HepG2 (cell line): ENCODE measurements at regions of chr14 and their contacts with region 1.

Region 1: GRCh38 chr14:35533357-35534207 is at the start of gene INSM2:
- DNase-seq: peak; percentile 70
- ATAC-seq: peak; percentile 84
- H3K4me3 ChIP-seq: peak within 1 kb of the TSS; percentile 62 to 80 (median 63)
- H3K27ac ChIP-seq: no peak within 1 kb of the TSS
- H3K4me1 ChIP-seq: peaks cover 20% of the 10 kb centered on the region
- H3K27me3 ChIP-seq: peaks cover 11 to 55% of the 10 kb centered on the region in 2 experiments
- CTCF ChIP-seq: peak; percentile 58
- EP300 ChIP-seq: no peak
- POLR2A ChIP-seq: no peak
- RAD21 ChIP-seq: peak; percentile 38
- total RNA-seq, gene INSM2: not detected in 2 replicates

Region 2: DNA sequence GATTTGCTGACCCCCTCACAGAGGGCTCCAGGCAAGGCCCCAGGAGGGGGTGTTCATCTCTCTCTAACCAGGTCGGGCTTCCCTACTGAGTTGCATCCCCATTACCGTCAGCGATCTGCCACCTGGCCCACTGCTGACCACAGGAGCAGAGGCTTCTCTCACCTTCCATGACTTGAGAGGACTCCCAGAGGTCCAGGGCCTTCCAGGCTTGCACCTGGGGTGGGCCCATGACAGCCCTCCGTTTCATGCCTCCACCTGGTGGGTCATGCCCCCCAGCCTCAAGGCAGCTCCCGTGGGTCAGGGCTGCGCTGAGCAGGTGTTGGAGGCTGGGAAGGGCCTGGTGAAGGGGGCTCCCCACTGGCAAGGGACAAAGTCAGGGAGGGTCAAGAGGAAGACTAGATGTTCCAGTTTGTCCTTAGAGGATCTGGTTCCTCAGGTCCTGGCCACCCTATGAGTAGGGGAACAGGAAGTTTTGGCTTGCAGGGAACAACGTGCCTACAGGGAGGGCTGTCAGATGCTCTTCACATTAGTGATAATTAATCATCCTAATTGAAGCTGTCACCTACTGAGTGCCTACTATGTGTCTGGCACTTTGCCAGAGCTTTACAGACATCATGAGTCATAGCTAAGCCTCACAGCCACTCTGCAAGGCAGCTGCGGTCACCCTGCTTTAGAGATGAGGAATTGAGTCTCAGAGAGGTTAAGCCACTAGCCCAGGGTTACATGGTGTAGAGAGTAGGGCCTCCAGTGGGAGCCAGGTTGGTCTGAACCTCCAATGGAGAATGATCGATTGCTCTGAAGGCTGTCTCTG is 142.8 kb before region 1 on chr14:
- CTCF ChIA-PET with region 1: no interaction called
- POLR2A ChIA-PET with region 1: no interaction called
- in situ Hi-C with region 1: no loop called
- intact Hi-C with region 1: no loop called
- DNase-seq: no peak
- ATAC-seq: peak; percentile 21
- H3K4me3 ChIP-seq: no peak overlapping the region
- H3K27ac ChIP-seq: no peak overlapping the region
- H3K4me1 ChIP-seq: peaks cover 47% of the 10 kb centered on the region
- H3K27me3 ChIP-seq: no peaks in the 10 kb centered on the region; a peak in 1 of 5 replicates
- CTCF ChIP-seq: no peak
- EP300 ChIP-seq: no peak
- POLR2A ChIP-seq: no peak
- RAD21 ChIP-seq: no peak

Region 3: DNA sequence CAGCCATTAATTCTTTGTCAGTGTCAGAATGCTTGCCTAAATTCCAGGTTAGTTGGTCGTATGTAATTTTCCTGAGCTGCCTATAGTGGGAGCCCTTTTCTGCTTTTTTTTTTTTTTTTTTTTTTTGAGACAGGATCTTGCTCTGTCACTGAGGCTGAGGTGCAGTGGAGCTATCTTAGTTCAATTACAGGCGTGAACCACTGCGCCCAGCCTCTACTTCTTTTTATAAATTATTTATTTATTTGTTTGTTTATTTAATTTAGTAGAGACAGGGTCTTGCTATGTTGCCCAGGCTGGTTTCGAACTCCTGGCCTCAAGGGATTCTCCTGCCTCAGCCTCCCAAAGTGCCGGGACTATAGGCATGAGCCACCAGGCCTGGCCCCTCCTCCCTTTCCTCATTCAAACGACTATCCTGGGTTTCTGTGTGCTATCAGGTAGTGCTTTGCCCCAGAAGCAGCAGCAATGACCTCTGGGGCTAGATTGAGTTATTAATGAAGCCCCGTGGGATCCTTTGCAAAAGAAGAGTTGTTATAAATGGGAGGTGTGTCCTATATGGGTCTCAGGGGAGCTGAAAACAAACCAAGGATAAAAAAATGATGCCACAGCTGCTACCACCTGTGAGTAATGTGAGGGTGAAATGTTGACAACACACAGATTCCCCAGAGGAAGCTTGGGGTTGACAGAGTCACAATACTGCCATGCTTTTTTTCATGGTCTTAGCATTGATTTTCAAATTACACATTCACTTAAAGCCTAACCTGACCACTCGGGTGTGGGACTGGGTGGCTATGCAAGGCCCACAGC is 94.5 kb before region 1 on chr14:
- CTCF ChIA-PET with region 1: no interaction called
- POLR2A ChIA-PET with region 1: no interaction called
- in situ Hi-C with region 1: no loop called
- intact Hi-C with region 1: loop called (anchors 5 kb)
- DNase-seq: peak; percentile 52
- ATAC-seq: peak; percentile 75
- H3K4me3 ChIP-seq: no peak overlapping the region
- H3K27ac ChIP-seq: no peak overlapping the region
- H3K4me1 ChIP-seq: no peaks in the 10 kb centered on the region
- H3K27me3 ChIP-seq: no peaks in the 10 kb centered on the region
- CTCF ChIP-seq: peak; percentile 70
- EP300 ChIP-seq: no peak
- POLR2A ChIP-seq: no peak
- RAD21 ChIP-seq: no peak; the same call in 1 of the 2 replicates

Region 4: DNA sequence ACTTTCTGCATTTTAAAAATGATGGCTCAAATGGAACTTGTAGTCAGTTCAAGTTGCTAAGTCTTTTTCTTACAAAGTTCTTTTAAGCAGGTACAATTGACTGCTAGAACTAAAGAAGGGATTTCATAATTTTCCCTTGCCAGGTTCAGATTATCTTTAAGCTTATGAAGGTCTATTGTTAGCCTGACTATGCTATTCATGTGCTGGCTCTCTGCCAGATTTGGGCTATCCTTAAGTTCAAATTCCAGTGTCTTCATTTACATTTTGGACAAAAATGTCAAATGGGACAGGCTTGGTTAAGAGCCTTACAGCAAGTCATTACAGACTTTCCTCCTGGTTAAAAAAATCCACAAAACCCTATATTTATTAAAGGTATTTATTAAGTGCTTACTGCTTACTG is 42.7 kb after region 1 on chr14:
- CTCF ChIA-PET with region 1: no interaction called
- POLR2A ChIA-PET with region 1: no interaction called
- in situ Hi-C with region 1: no loop called
- intact Hi-C with region 1: loop called (anchors 2 kb)
- DNase-seq: peak; percentile 82
- ATAC-seq: peak; percentile 65
- H3K4me3 ChIP-seq: no peak overlapping the region
- H3K27ac ChIP-seq: no peak overlapping the region
- H3K4me1 ChIP-seq: peaks cover 18% of the 10 kb centered on the region
- H3K27me3 ChIP-seq: no peaks in the 10 kb centered on the region
- CTCF ChIP-seq: no peak
- EP300 ChIP-seq: no peak
- POLR2A ChIP-seq: no peak
- RAD21 ChIP-seq: no peak

Region 5: GRCh38 chr14:36028218-36028617 is 494.6 kb after region 1 on chr14:
- CTCF ChIA-PET with region 1: no interaction called
- POLR2A ChIA-PET with region 1: no interaction called
- in situ Hi-C with region 1: no loop called
- intact Hi-C with region 1: no loop called
- DNase-seq: no peak
- ATAC-seq: peak; percentile 62; the same call in 2 of the 3 replicates
- H3K4me3 ChIP-seq: no peak overlapping the region
- H3K27ac ChIP-seq: no peak overlapping the region
- H3K4me1 ChIP-seq: no peaks in the 10 kb centered on the region
- H3K27me3 ChIP-seq: no peaks in the 10 kb centered on the region
- CTCF ChIP-seq: peak; percentile 63
- EP300 ChIP-seq: no peak
- POLR2A ChIP-seq: no peak
- RAD21 ChIP-seq: no peak

Region 6: DNA sequence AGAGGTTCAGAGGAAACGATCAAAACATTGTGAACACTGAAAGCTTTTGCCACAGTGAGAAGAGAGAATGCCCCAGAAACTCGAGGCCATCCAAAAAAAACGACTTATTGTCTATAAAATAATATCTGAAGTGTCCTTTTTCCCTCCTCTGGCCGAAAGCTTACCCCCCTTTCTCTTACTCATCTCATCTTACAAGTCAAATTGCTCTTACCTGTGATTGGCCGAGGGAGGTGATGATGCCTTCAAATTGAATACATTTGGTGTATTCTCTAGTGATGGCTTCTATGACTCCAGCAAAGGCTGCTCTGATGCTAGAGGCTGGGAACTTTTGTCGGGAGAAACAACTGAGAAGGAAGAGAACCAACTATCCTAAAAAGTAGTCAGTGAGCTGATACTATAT is 552.3 kb after region 1 on chr14:
- CTCF ChIA-PET with region 1: no interaction called
- POLR2A ChIA-PET with region 1: no interaction called
- in situ Hi-C with region 1: no loop called
- intact Hi-C with region 1: no loop called
- DNase-seq: no peak
- ATAC-seq: no peak
- H3K4me3 ChIP-seq: no peak overlapping the region
- H3K27ac ChIP-seq: no peak overlapping the region
- H3K4me1 ChIP-seq: peaks cover 6% of the 10 kb centered on the region
- H3K27me3 ChIP-seq: no peaks in the 10 kb centered on the region
- CTCF ChIP-seq: no peak
- EP300 ChIP-seq: no peak
- POLR2A ChIP-seq: no peak
- RAD21 ChIP-seq: no peak